Breast epithelium (tissue), 4 donors: ENCODE measurements at regions of chr17 and their contacts with region 1.

Region 1: GRCh38 chr17:8189711-8190477 is at the start of gene BORCS6:
- DNase-seq: peak; percentile 95 to 98
- H3K4me3 ChIP-seq: peak within 1 kb of the TSS; percentile 68 to 93 (median 91)
- H3K27ac ChIP-seq: peak within 1 kb of the TSS; percentile 94 to 96
- H3K4me1 ChIP-seq: peaks cover 0 to 10% of the 10 kb centered on the region in 2 donors
- H3K27me3 ChIP-seq: no peaks in the 10 kb centered on the region
- CTCF ChIP-seq: no peak
- POLR2A ChIP-seq: peak; percentile 59
- total RNA-seq, gene BORCS6: 8.5 to 11.5 (median 10.8) TPM

Region 2: GRCh38 chr17:6796887-6797490 is 1392.9 kb before region 1 on chr17:
- intact Hi-C with region 1: no loop called
- DNase-seq: no peak
- H3K4me3 ChIP-seq: no peak overlapping the region
- H3K27ac ChIP-seq: no peak overlapping the region
- H3K4me1 ChIP-seq: no peaks in the 10 kb centered on the region
- H3K27me3 ChIP-seq: no peaks in the 10 kb centered on the region
- CTCF ChIP-seq: no peak
- POLR2A ChIP-seq: no peak

Region 3: GRCh38 chr17:8121675-8122421 is 68.0 kb before region 1 on chr17:
- intact Hi-C with region 1: loop called (anchors 1 kb)
- DNase-seq: no peak
- H3K4me3 ChIP-seq: peak overlapping the region; percentile 45 to 83 (median 66)
- H3K27ac ChIP-seq: peak overlapping the region; percentile 58 to 61
- H3K4me1 ChIP-seq: peaks cover 19 to 41% of the 10 kb centered on the region in 2 donors
- H3K27me3 ChIP-seq: no peaks in the 10 kb centered on the region
- CTCF ChIP-seq: peak in 1 of 3 donors; percentile 7
- POLR2A ChIP-seq: no peak

Region 4: DNA sequence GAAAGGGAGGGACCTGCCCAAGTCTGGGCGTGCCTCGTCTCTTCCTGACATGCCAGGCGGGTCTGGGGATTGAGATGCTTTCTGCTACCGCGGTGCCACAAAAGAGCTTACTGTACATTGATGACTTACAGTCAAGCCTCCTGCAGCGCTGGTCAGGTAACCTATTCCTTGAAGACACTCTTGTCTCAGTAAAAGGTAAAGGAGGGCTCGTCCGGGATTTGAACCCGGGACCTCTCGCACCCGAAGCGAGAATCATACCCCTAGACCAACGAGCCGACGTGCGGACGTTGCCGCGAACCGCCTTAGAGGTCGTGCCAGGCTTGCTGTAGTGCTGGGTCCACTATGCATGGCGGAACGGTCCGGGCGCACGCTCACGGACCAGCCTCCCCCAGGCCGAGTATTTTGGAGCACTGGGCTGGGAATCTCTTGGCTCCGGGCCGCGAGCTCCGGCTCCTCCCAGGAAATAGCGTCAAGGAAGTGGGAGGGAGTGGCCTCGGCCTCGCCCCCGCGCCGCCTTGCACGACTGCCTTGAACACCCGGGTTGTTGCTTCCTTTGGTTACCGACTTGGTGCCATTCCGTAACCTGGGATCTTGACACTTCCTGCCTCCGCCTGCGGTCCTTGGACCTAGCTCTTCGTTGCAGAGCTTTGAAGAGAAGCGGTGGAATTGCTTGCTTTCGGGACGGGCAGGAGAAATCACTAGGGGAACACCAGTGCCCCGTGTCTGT is 32.9 kb after region 1 on chr17:
- intact Hi-C with region 1: loop called (anchors 5 kb)
- DNase-seq: peak; percentile 94 to 96
- H3K4me3 ChIP-seq: peak overlapping the region; percentile 68 to 91 (median 76)
- H3K27ac ChIP-seq: peak overlapping the region; percentile 98
- H3K4me1 ChIP-seq: no peaks in the 10 kb centered on the region
- H3K27me3 ChIP-seq: no peaks in the 10 kb centered on the region
- CTCF ChIP-seq: peak in 1 of 3 donors; percentile 10
- POLR2A ChIP-seq: peak; percentile 74